A549 (cell line): ENCODE measurements at regions of chr12 and their contacts with region 1.

Region 1: GRCh38 chr12:2198005-2198501 is 145.3 kb downstream of the CACNA1C start:
- DNase-seq: no peak
- ATAC-seq: no peak
- H3K4me3 ChIP-seq: no peak overlapping the region
- H3K27ac ChIP-seq: no peak overlapping the region
- H3K4me1 ChIP-seq: no peaks in the 10 kb centered on the region
- CTCF ChIP-seq: no peak
- EP300 ChIP-seq: no peak
- POLR2A ChIP-seq: no peak
- RAD21 ChIP-seq: no peak

Region 2: DNA sequence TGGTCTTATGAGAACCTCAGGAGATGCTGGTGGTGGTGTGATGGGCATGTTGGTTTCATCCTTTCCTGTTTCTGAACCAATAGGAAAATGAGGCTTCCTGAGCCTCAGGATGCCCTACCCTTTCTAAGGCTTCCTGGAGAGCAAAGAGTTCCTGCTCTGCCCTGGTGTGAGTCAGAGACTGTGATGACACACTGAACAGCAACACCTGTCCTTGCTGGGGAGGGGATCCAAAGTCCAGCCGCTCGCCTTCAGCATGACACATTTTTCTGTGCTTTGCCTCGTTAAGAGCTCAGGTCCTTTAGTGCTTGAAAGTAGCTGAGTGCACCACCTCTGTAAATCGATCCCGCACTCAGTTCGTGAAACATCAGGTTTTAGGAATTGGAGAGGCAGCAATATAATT is 29.2 kb before region 1 on chr12:
- CTCF ChIA-PET with region 1: no interaction called
- POLR2A ChIA-PET with region 1: no interaction called
- DNase-seq: peak in 1 of 2 experiments; percentile 42
- ATAC-seq: peak; percentile 32 to 76; a peak in 3 of 6 replicates
- H3K4me3 ChIP-seq: no peak overlapping the region
- H3K27ac ChIP-seq: no peak overlapping the region
- H3K4me1 ChIP-seq: no peaks in the 10 kb centered on the region
- CTCF ChIP-seq: no peak
- EP300 ChIP-seq: no peak
- POLR2A ChIP-seq: no peak
- RAD21 ChIP-seq: no peak

Region 3: GRCh38 chr12:2212971-2213869 is 15.2 kb after region 1 on chr12:
- CTCF ChIA-PET with region 1: interaction called, 15 read pairs
- POLR2A ChIA-PET with region 1: no interaction called
- DNase-seq: no peak
- ATAC-seq: no peak
- H3K4me3 ChIP-seq: no peak overlapping the region
- H3K27ac ChIP-seq: no peak overlapping the region
- H3K4me1 ChIP-seq: no peaks in the 10 kb centered on the region
- CTCF ChIP-seq: no peak
- EP300 ChIP-seq: no peak
- POLR2A ChIP-seq: no peak
- RAD21 ChIP-seq: no peak